Common myeloid progenitor, CD34-positive (primary cell): ENCODE measurements at regions of chr17 and their contacts with region 1.

Region 1: GRCh38 chr17:74659898-74660297 is 36.4 kb upstream of the CD300E start:
- DNase-seq: no peak
- H3K4me3 ChIP-seq: no peak overlapping the region
- H3K27ac ChIP-seq: no peak overlapping the region
- H3K4me1 ChIP-seq: peaks cover 0 to 13% (median 6%) of the 10 kb centered on the region in 4 experiments
- H3K27me3 ChIP-seq: no peaks in the 10 kb centered on the region

Region 2: DNA sequence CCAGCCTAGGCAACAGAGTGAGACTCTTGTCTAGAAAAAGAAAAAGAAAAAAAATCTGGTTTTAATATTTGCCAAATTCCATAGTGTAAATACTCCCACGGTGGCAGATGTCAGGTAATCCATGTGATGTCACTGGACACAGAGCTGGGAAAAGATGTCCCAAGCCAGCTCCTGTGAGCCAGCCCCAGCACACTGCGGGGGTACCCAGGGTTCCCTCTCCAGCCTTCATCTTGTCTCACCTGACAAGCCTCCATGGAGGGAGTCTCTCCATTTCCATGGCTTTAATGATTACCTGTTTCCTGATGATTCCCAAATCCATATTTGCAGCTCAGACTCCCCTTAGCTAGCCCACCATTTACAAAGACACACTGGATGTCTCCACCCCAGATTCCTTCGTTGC is 133.2 kb before region 1 on chr17:
- CTCF ChIA-PET with region 1: no interaction called
- POLR2A ChIA-PET with region 1: no interaction called
- DNase-seq: no peak
- H3K4me3 ChIP-seq: no peak overlapping the region
- H3K27ac ChIP-seq: no peak overlapping the region
- H3K4me1 ChIP-seq: peaks cover under 1 to 31% (median 26%) of the 10 kb centered on the region in 4 experiments
- H3K27me3 ChIP-seq: no peaks in the 10 kb centered on the region

Region 3: GRCh38 chr17:74623693-74624093 is 36.2 kb before region 1 on chr17 and contains the start of gene CD300E:
- CTCF ChIA-PET with region 1: no interaction called
- POLR2A ChIA-PET with region 1: no interaction called
- DNase-seq: no peak
- H3K4me3 ChIP-seq: no peak within 1 kb of the TSS
- H3K27ac ChIP-seq: no peak within 1 kb of the TSS
- H3K4me1 ChIP-seq: no peaks in the 10 kb centered on the region
- H3K27me3 ChIP-seq: peaks cover 0 to 58% (median 8%) of the 10 kb centered on the region in 5 experiments

Region 4: DNA sequence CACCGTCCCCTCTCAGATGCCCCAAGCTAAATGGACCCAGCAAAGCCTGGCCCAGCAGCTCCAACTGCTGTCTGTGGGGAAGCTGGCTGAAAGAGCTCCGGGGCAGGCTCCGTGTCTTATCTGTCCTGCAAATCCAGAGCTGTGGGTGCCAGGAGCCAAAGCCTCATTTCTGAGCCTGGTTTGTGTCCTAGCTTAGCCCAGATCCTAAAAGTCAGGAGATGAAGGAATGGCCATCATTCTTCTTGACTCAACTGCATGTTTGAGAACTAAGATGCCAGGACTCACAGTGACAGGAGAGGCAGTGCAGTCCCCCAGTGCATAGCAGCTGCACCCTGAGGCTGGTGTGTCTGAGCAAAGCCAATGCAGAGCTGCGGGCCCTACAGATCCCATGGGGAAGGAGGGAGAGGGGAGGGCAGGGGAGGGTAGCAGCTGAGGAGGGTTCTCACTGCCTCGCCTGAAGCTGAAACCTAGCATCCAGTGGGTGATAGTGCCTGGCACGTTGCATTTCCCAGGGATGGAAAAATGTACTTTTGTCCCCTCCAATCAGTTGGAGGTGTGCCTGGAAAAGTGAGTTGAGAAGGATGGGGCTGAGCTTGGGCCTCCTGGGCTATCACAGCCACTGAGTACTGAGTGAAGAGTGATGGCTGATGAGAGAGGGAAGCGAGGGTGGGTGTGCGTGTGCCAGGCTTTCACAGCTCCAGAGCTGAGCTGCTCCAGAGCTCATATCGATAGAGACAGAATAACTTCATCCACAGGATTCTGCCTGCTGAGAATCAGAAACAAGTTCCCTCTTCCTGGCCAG is 11.8 kb before region 1 on chr17:
- CTCF ChIA-PET with region 1: interaction called, 14 read pairs
- POLR2A ChIA-PET with region 1: no interaction called
- DNase-seq: no peak
- H3K4me3 ChIP-seq: no peak overlapping the region
- H3K27ac ChIP-seq: no peak overlapping the region
- H3K4me1 ChIP-seq: peaks cover 0 to 2% (median 0%) of the 10 kb centered on the region in 4 experiments
- H3K27me3 ChIP-seq: peaks cover 0 to 27% (median 12%) of the 10 kb centered on the region in 5 experiments

Region 5: GRCh38 chr17:74742153-74742515 is 82.2 kb after region 1 on chr17:
- CTCF ChIA-PET with region 1: interaction called, 151 read pairs
- POLR2A ChIA-PET with region 1: interaction called, 23 read pairs
- DNase-seq: peak; percentile 64 to 89 (median 82)
- H3K4me3 ChIP-seq: peak overlapping the region in 2 of 7 experiments; percentile 26 to 40
- H3K27ac ChIP-seq: peak overlapping the region in 1 of 2 experiments; percentile 74
- H3K4me1 ChIP-seq: peaks cover 18 to 98% (median 91%) of the 10 kb centered on the region in 4 experiments
- H3K27me3 ChIP-seq: no peaks in the 10 kb centered on the region

Region 6: DNA sequence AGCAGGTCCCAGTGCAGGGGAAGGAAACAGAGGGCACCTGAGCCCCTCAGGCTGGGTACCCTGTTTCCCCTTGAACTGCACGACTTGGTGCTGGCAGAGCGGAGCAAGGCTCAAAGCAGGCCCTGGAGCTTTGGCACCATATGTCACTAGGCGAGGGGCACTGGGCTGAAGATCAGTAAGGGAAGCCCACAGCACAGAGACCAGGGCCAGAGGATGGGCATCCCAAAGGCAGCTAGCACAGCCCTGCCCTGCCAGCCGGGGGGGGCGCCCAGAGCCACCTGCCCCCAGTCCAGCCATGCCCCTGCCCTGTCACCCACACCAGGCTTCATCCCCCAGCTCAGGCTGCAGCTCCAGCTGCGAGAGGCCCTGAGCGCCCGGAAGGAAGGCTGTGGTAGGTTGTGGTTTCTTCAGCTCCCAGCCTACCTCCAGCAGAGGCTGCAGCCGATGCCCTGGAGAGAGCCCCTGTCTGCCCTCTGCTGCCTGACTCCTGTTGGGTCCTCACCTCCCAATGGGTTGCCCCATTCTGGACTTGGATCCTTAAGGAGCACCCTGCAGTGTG is 99.4 kb after region 1 on chr17:
- CTCF ChIA-PET with region 1: interaction called, 21 read pairs
- POLR2A ChIA-PET with region 1: interaction called, 4 read pairs
- DNase-seq: peak; percentile 83 to 94 (median 93)
- H3K4me3 ChIP-seq: peak overlapping the region in 6 of 7 experiments; percentile 2 to 65 (median 44)
- H3K27ac ChIP-seq: peak overlapping the region; percentile 5 to 76
- H3K4me1 ChIP-seq: peaks cover 8 to 76% (median 66%) of the 10 kb centered on the region in 4 experiments
- H3K27me3 ChIP-seq: no peaks in the 10 kb centered on the region

Region 7: DNA sequence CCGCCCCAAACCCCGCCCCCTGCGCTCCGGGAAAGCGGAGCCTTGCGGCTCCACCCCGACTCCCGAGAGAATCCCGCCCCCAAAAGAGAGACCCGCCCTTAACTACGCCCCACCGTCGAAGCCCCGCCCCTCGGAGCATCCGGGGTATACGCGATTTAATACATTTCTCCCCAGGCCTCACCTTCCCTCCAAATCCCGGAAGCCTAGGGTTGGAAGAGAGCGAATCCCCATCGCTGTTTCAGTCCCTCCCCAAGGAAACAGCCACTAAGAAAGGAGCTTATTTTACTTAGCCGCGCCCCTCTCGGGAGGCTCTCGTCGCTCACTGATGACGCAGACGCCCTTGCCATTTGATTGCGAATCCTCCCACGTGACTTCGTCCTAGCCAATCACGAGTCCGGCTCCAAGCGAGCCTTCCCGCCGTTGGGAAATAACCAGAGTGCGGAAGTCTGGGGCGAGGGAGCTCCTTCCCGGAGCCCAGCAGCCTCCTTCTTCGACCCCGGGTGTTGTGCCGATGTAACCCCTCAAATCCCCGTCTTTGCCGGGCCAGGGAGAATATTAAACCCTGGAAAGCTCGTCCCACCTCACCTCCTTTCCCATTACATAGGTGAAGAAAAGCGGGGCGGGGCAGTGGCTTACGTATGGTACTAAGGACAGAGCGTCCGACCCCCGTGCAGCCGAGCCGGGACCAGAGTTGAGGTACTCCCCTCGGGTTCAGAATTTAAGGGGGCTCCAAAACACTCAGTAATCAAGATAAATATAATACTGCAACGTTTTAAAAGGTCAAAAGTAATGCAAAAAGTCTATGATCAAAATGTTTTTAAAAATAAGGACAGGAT is 213.4 kb after region 1 on chr17:
- CTCF ChIA-PET with region 1: no interaction called
- POLR2A ChIA-PET with region 1: no interaction called
- DNase-seq: peak; percentile 100
- H3K4me3 ChIP-seq: peak overlapping the region; percentile 68 to 95 (median 85)
- H3K27ac ChIP-seq: peak overlapping the region; percentile 86 to 94
- H3K4me1 ChIP-seq: peaks cover 4 to 29% (median 13%) of the 10 kb centered on the region in 4 experiments
- H3K27me3 ChIP-seq: no peaks in the 10 kb centered on the region